Naive thymus-derived CD4-positive, alpha-beta T cell (primary cell): ENCODE measurements at regions of chr10 and their contacts with region 1.

Region 1: DNA sequence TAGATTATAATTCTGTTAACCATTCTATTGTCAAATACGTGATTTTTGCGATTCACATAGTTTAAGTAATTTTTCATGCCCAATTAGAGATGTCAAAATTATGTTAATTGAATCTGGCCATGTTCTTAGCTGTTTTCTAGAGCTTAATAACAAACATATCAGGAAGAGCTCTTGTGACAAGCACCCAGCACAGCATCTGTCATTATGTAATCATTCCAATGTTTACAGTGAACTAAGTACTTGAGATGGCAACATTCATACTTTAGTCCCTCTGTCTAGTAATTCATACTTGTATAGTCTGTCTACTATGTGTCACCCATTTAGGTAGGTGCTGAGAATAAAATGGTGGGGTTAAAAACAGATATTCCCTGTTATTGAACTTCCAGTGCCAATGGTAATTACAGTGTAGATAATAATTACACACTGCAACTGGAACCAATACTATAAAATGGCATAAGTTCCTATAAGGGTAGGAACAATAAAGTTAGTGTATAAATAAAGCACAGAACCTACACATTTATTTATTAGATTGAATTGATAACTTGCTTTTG is 55.2 kb downstream of the ZEB1 start:
- DNase-seq: no peak
- ATAC-seq: no peak
- H3K4me3 ChIP-seq: no peak overlapping the region
- H3K4me3 Mint-ChIP-seq: peak overlapping the region in 1 of 10 donors; percentile 22
- H3K27ac ChIP-seq: no peak overlapping the region
- H3K27ac Mint-ChIP-seq: no peak overlapping the region
- H3K4me1 ChIP-seq: peaks cover 0 to 21% of the 10 kb centered on the region in 2 donors
- H3K4me1 Mint-ChIP-seq: peaks cover 19 to 80% (median 64%) of the 10 kb centered on the region in 7 donors
- H3K27me3 ChIP-seq: no peaks in the 10 kb centered on the region
- H3K27me3 Mint-ChIP-seq: no peaks in the 10 kb centered on the region

Region 2: GRCh38 chr10:31343551-31343950 is 30.7 kb before region 1 on chr10:
- CTCF ChIA-PET with region 1: no interaction called
- POLR2A ChIA-PET with region 1: no interaction called
- intact Hi-C with region 1: loop called in 1 of 2 experiments (anchors 2 kb)
- DNase-seq: no peak
- ATAC-seq: no peak
- H3K4me3 ChIP-seq: no peak overlapping the region
- H3K4me3 Mint-ChIP-seq: peak overlapping the region in 4 of 10 donors; percentile 16 to 41 (median 30)
- H3K27ac ChIP-seq: no peak overlapping the region
- H3K27ac Mint-ChIP-seq: peak overlapping the region in 2 of 9 donors; percentile 16 to 22
- H3K4me1 ChIP-seq: peaks cover 37 to 48% of the 10 kb centered on the region in 2 donors
- H3K4me1 Mint-ChIP-seq: peaks cover 33 to 51% (median 46%) of the 10 kb centered on the region in 7 donors
- H3K27me3 ChIP-seq: no peaks in the 10 kb centered on the region
- H3K27me3 Mint-ChIP-seq: no peaks in the 10 kb centered on the region

Region 3: DNA sequence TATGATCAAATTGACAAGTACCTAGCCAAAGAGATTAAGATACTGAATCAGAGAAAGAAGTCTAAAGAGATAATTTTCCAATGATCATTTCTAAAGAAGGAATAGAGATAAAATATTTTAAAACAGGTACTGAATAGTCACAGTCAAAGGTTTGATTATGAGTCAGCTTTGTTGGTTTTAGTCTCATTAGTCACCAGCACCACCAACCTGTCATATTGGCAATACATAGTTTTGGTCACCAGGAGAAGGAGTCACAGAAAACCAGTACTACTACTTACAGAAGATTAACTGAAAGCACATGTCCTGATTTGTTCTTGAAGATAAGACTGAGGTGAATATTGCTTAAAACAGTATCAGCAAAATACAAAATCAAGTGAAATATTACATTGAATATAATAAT is 20.6 kb before region 1 on chr10:
- CTCF ChIA-PET with region 1: interaction called, 3 read pairs
- POLR2A ChIA-PET with region 1: no interaction called
- intact Hi-C with region 1: loop called in 1 of 2 experiments (anchors 2 kb)
- DNase-seq: peak in 2 of 9 donors; percentile 21 to 41
- ATAC-seq: peak; percentile 73
- H3K4me3 ChIP-seq: no peak overlapping the region
- H3K4me3 Mint-ChIP-seq: peak overlapping the region in 1 of 10 donors; percentile 8
- H3K27ac ChIP-seq: no peak overlapping the region
- H3K27ac Mint-ChIP-seq: no peak overlapping the region
- H3K4me1 ChIP-seq: peaks cover 4 to 12% of the 10 kb centered on the region in 2 donors
- H3K4me1 Mint-ChIP-seq: peaks cover 35 to 88% (median 76%) of the 10 kb centered on the region in 7 donors
- H3K27me3 ChIP-seq: no peaks in the 10 kb centered on the region
- H3K27me3 Mint-ChIP-seq: no peaks in the 10 kb centered on the region

Region 4: GRCh38 chr10:31635415-31636065 is 261.3 kb after region 1 on chr10:
- CTCF ChIA-PET with region 1: no interaction called
- POLR2A ChIA-PET with region 1: no interaction called
- intact Hi-C with region 1: no loop called
- DNase-seq: no peak
- ATAC-seq: no peak
- H3K4me3 ChIP-seq: no peak overlapping the region
- H3K4me3 Mint-ChIP-seq: no peak overlapping the region
- H3K27ac ChIP-seq: no peak overlapping the region
- H3K27ac Mint-ChIP-seq: no peak overlapping the region
- H3K4me1 ChIP-seq: no peaks in the 10 kb centered on the region
- H3K4me1 Mint-ChIP-seq: no peaks in the 10 kb centered on the region
- H3K27me3 ChIP-seq: no peaks in the 10 kb centered on the region
- H3K27me3 Mint-ChIP-seq: peaks cover 0 to 9% (median 1%) of the 10 kb centered on the region in 5 donors